ENCODE measurements at regions of chr9 and their contacts with region 1.

Region 1: DNA sequence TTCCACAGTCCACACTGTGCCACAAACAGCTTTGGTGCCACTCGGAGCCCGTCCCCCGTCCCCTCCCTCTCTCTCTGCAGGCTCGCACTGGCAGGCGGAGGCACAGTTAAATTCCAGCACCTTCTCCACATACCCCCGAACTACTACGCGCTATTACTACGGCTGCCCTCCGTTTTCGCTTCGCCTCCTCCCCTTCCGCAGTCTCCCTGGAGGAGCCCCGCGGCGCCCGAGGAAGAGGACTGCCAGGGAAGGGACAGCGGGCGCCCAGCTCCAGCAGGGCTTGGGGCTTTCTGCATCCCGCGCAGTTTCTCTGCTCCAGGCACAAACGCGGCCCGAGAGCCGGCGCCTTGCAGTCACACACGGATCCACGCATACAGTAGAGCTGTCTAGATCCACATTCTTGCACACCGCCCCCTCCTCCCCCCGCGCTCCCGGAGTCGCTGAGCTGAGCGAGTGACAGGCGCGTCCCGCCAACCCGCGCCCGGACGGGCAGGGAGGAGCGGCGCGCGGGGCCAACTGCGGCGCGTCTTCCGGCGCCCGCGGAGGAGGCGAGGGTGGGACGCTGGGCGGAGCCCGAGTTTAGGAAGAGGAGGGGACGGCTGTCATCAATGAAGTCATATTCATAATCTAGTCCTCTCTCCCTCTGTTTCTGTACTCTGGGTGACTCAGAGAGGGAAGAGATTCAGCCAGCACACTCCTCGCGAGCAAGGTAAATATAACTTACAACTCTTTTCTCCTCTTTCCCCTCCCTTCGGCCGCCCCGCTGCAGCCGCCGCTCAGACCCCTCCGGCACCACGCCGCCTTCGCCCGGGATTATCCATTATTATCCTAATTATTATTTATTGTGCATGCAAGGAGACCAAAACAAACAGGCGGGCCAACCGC is at the start of gene SMARCA2:
- DNase-seq: peak; percentile 82 to 89
- H3K4me3 ChIP-seq: peak within 1 kb of the TSS; percentile 91
- H3K27ac ChIP-seq: no peak within 1 kb of the TSS
- H3K4me1 ChIP-seq: peaks cover 18% of the 10 kb centered on the region
- H3K27me3 ChIP-seq: no peaks in the 10 kb centered on the region
- CTCF ChIP-seq: no peak
- total RNA-seq, gene SMARCA2: 22.6 and 29.3 TPM in 2 replicates

Region 2: DNA sequence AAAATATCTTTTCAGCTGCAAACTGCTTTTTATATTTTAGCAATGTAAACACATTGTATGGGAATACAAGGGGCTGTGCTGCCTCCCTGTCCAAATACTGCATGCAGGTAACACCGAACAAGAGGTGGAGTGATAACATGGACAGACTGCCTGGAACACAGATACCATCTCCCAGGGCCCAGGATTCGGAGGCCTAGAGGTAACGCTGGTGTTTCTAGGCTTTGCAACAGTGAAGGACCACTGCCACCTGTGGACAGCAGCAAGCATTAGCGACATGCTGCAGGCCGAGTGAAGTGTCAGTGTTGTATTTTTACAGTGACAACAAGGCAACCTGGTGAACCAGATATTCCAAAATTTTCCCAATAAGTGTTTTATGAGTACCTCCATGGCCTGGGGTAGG is 585.6 kb before region 1 on chr9:
- CTCF ChIA-PET with region 1: no interaction called
- POLR2A ChIA-PET with region 1: no interaction called
- intact Hi-C with region 1: no loop called
- DNase-seq: no peak
- H3K4me3 ChIP-seq: no peak overlapping the region
- H3K27ac ChIP-seq: no peak overlapping the region
- H3K4me1 ChIP-seq: no peaks in the 10 kb centered on the region
- H3K27me3 ChIP-seq: peaks cover 12% of the 10 kb centered on the region; the same call in 1 of the 2 replicates
- CTCF ChIP-seq: no peak; the same call in 1 of the 2 replicates

Region 3: DNA sequence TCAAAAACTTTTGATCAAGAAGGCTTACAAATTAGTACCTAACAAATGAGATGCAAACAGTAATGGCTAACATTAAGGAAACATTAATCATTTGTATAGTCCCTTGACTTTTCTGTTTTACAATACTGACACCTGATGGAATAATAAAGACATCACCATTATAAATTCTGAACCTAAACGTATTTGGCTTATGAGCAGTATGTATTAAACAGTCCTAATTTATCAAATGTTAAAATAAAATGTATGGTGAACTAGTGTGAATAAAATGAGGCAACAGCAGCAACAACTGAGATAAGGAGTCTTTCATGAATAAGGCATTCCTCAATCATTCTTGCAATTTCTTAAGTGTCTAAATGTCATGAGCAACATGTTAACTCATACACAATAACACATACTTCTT is 823.0 kb after region 1 on chr9:
- CTCF ChIA-PET with region 1: no interaction called
- POLR2A ChIA-PET with region 1: no interaction called
- intact Hi-C with region 1: loop called (anchors 5 kb)
- DNase-seq: no peak
- H3K4me3 ChIP-seq: no peak overlapping the region
- H3K27ac ChIP-seq: no peak overlapping the region
- H3K4me1 ChIP-seq: peaks cover 13% of the 10 kb centered on the region
- H3K27me3 ChIP-seq: no peaks in the 10 kb centered on the region
- CTCF ChIP-seq: peak; percentile 28; the same call in 1 of the 2 replicates